ENCODE measurements at regions of chr2 and their contacts with region 1.

Region 1: GRCh38 chr2:159118115-159118858 is 149.8 kb downstream of the TANC1 start:
- DNase-seq: peak; percentile 46 to 83 (median 72)
- ATAC-seq: peak; percentile 86
- H3K4me3 ChIP-seq: no peak overlapping the region
- H3K4me3 Mint-ChIP-seq: no peak overlapping the region
- H3K27ac ChIP-seq: no peak overlapping the region
- H3K27ac Mint-ChIP-seq: peak overlapping the region in 2 of 9 donors; percentile 23 to 34
- H3K4me1 ChIP-seq: no peaks in the 10 kb centered on the region
- H3K4me1 Mint-ChIP-seq: peaks cover 0 to 13% (median 7%) of the 10 kb centered on the region in 7 donors
- H3K27me3 ChIP-seq: no peaks in the 10 kb centered on the region
- H3K27me3 Mint-ChIP-seq: no peaks in the 10 kb centered on the region

Region 2: GRCh38 chr2:158903711-158904443 is 214.4 kb before region 1 on chr2:
- CTCF ChIA-PET with region 1: interaction called, 20 read pairs
- POLR2A ChIA-PET with region 1: no interaction called
- intact Hi-C with region 1: loop called (anchors 1 kb)
- DNase-seq: no peak
- ATAC-seq: no peak
- H3K4me3 ChIP-seq: no peak overlapping the region
- H3K4me3 Mint-ChIP-seq: no peak overlapping the region
- H3K27ac ChIP-seq: no peak overlapping the region
- H3K27ac Mint-ChIP-seq: no peak overlapping the region
- H3K4me1 ChIP-seq: no peaks in the 10 kb centered on the region
- H3K4me1 Mint-ChIP-seq: no peaks in the 10 kb centered on the region
- H3K27me3 ChIP-seq: no peaks in the 10 kb centered on the region
- H3K27me3 Mint-ChIP-seq: peaks cover 0 to 11% (median 0%) of the 10 kb centered on the region in 5 donors

Region 3: GRCh38 chr2:159030674-159031380 is 87.5 kb before region 1 on chr2:
- CTCF ChIA-PET with region 1: interaction called, 20 read pairs
- POLR2A ChIA-PET with region 1: no interaction called
- intact Hi-C with region 1: loop called in 1 of 2 experiments (anchors 1 kb)
- DNase-seq: no peak
- ATAC-seq: no peak
- H3K4me3 ChIP-seq: no peak overlapping the region
- H3K4me3 Mint-ChIP-seq: no peak overlapping the region
- H3K27ac ChIP-seq: no peak overlapping the region
- H3K27ac Mint-ChIP-seq: no peak overlapping the region
- H3K4me1 ChIP-seq: no peaks in the 10 kb centered on the region
- H3K4me1 Mint-ChIP-seq: no peaks in the 10 kb centered on the region
- H3K27me3 ChIP-seq: no peaks in the 10 kb centered on the region
- H3K27me3 Mint-ChIP-seq: no peaks in the 10 kb centered on the region

Region 4: GRCh38 chr2:159091976-159092375 is 26.3 kb before region 1 on chr2:
- CTCF ChIA-PET with region 1: interaction called, 5 read pairs
- POLR2A ChIA-PET with region 1: interaction called, 4 read pairs
- intact Hi-C with region 1: loop called in 1 of 2 experiments (anchors 1 kb)
- DNase-seq: peak in 7 of 9 donors; percentile 14 to 73 (median 61)
- ATAC-seq: peak; percentile 76
- H3K4me3 ChIP-seq: no peak overlapping the region
- H3K4me3 Mint-ChIP-seq: peak overlapping the region; percentile 16 to 86 (median 52)
- H3K27ac ChIP-seq: no peak overlapping the region
- H3K27ac Mint-ChIP-seq: peak overlapping the region; percentile 1 to 88 (median 80)
- H3K4me1 ChIP-seq: peaks cover 4 to 31% of the 10 kb centered on the region in 2 donors
- H3K4me1 Mint-ChIP-seq: peaks cover 29 to 78% (median 67%) of the 10 kb centered on the region in 7 donors
- H3K27me3 ChIP-seq: no peaks in the 10 kb centered on the region
- H3K27me3 Mint-ChIP-seq: no peaks in the 10 kb centered on the region

Region 5: GRCh38 chr2:159185401-159186130 is 67.3 kb after region 1 on chr2:
- CTCF ChIA-PET with region 1: no interaction called
- POLR2A ChIA-PET with region 1: no interaction called
- intact Hi-C with region 1: loop called in 1 of 2 experiments (anchors 1 kb)
- DNase-seq: peak in 6 of 9 donors; percentile 7 to 52 (median 35)
- ATAC-seq: peak; percentile 65
- H3K4me3 ChIP-seq: no peak overlapping the region
- H3K4me3 Mint-ChIP-seq: no peak overlapping the region
- H3K27ac ChIP-seq: no peak overlapping the region
- H3K27ac Mint-ChIP-seq: no peak overlapping the region
- H3K4me1 ChIP-seq: no peaks in the 10 kb centered on the region
- H3K4me1 Mint-ChIP-seq: peaks cover 0 to 14% (median 4%) of the 10 kb centered on the region in 7 donors
- H3K27me3 ChIP-seq: no peaks in the 10 kb centered on the region
- H3K27me3 Mint-ChIP-seq: peaks cover 0 to 2% (median 0%) of the 10 kb centered on the region in 5 donors